Heart right ventricle (tissue), 16 donors: ENCODE measurements at regions of chr20 and their contacts with region 1.

Region 1: DNA sequence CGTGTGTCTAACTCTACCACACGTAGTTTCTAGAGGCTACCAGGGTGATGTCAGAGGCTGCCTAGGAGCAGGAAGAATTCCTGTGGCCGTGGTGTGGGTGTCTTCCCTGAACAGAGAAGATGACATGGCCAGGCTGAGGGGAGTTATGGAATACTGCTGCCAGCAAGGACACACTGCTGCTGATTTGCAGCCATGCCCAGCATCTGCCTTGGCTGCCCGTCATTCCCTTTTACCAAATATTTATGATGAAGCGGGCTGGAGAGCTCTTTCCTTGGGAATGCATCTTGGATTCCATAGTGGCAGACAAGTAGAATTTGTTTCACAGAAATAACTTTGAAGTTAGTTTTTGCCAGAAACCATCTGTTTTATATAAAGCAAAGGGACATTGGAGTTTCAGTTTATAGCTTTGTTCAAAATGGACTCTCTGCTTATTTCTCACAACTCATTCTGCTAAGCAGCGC is 80.8 kb upstream of the VSTM2L start:
- DNase-seq: no peak
- ATAC-seq: no peak
- H3K4me3 ChIP-seq: no peak overlapping the region
- H3K27ac ChIP-seq: no peak overlapping the region
- H3K4me1 ChIP-seq: no peaks in the 10 kb centered on the region
- H3K27me3 ChIP-seq: no peaks in the 10 kb centered on the region
- CTCF ChIP-seq: no peak

Region 2: GRCh38 chr20:37764333-37764935 is 57.7 kb before region 1 on chr20:
- intact Hi-C with region 1: loop called in 1 of 10 experiments (anchors 10 kb)
- DNase-seq: no peak
- ATAC-seq: no peak
- H3K4me3 ChIP-seq: no peak overlapping the region
- H3K27ac ChIP-seq: no peak overlapping the region
- H3K4me1 ChIP-seq: no peaks in the 10 kb centered on the region
- H3K27me3 ChIP-seq: no peaks in the 10 kb centered on the region
- CTCF ChIP-seq: no peak